ENCODE measurements at regions of chr5 and their contacts with region 1.

Region 1: GRCh38 chr5:169980418-169981053 is at the start of gene INSYN2B:
- DNase-seq: peak; percentile 47
- H3K4me3 ChIP-seq: peak within 1 kb of the TSS; percentile 70
- CTCF ChIP-seq: peak; percentile 78

Region 2: DNA sequence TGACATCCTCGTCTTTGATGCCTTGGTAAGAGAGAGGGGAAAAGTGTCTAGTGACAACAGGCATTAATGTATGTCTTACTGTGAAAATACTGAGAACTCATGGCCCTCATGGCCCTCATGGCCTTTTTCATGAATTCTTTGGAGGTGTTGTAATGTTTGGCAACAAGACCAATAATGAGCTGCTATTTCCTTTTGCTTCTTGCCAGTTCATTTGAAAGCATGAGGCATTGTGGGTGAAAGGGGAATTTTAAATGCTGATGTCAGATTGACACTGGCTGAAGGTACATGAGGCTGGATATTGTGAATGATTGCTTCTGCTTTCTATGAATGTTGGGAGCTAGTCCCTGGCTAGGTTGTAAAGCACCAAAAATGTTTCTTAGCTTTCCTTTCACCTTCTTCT is 264.3 kb before region 1 on chr5:
- CTCF ChIA-PET with region 1: interaction called, 23 read pairs
- POLR2A ChIA-PET with region 1: no interaction called
- DNase-seq: peak; percentile 45
- H3K4me3 ChIP-seq: no peak overlapping the region
- CTCF ChIP-seq: no peak

Region 3: DNA sequence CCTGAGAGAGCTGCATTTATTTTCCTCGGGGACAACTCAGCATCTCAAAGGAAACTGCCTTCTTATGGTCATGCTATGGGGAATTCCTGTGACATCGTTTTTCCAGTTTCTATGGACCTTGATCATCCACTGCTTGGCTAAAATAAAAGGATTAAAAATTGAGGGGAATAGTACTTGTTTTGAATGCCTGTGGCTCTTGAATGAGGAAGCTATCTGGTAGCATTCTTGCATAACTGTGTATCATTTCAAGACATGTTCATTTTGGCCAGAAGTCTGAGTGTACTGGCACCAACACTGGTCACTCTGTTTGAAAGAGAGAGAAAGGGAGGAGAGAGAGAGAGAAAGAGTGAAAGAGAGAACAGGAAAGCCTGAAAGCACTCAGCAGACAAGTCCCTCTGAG is 226.7 kb before region 1 on chr5:
- CTCF ChIA-PET with region 1: interaction called, 23 read pairs
- POLR2A ChIA-PET with region 1: no interaction called
- DNase-seq: peak; percentile 71
- H3K4me3 ChIP-seq: no peak overlapping the region
- CTCF ChIP-seq: no peak

Region 4: DNA sequence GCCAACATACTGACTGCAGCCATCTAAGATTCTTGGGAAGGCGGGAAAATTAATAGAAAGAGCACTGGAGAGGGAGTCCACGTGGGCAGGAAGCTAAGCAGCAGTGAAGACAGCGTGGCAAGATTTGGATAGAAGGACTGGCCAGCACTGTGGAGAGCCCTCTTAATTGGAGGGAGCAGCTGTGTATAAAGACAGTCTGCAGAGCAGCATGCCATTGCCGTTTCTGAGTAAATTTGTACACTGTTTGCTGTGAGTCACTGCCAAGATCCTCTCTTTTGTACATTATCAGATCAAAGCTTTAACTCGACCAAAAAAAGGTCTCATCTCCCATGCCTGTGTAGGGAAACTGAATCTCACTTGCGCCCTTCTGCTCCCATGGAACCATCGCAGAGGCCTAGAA is 45.5 kb before region 1 on chr5:
- CTCF ChIA-PET with region 1: interaction called, 20 read pairs
- POLR2A ChIA-PET with region 1: no interaction called
- DNase-seq: no peak
- H3K4me3 ChIP-seq: no peak overlapping the region
- CTCF ChIP-seq: no peak

Region 5: DNA sequence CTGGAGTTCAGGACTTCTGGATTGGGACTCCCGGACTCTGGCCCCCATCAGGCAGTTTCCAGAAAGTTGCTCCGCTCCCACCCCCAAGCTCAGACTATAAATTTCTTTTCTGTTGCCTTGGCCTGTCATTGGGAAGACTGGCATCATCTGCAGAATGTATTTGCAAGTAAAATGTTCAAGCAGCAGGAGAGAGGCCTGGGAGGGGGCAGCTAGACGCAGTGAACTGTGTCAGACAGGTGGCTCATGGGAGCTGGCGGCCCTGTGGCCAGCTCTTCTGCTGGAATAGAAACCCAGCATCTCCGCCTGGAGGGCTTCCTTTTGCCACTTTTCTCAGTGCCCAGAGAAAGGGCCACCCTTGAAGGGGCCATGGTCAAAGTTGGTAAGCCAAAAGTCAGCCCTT is 16.3 kb before region 1 on chr5:
- CTCF ChIA-PET with region 1: interaction called, 31 read pairs
- POLR2A ChIA-PET with region 1: no interaction called
- DNase-seq: no peak
- H3K4me3 ChIP-seq: no peak overlapping the region
- CTCF ChIP-seq: no peak

Region 6: GRCh38 chr5:170087168-170087817 is 106.8 kb after region 1 on chr5:
- CTCF ChIA-PET with region 1: no interaction called
- POLR2A ChIA-PET with region 1: no interaction called
- DNase-seq: no peak
- H3K4me3 ChIP-seq: no peak overlapping the region
- CTCF ChIP-seq: no peak